ENCODE measurements at regions of chr1 and their contacts with region 1.

Region 1: DNA sequence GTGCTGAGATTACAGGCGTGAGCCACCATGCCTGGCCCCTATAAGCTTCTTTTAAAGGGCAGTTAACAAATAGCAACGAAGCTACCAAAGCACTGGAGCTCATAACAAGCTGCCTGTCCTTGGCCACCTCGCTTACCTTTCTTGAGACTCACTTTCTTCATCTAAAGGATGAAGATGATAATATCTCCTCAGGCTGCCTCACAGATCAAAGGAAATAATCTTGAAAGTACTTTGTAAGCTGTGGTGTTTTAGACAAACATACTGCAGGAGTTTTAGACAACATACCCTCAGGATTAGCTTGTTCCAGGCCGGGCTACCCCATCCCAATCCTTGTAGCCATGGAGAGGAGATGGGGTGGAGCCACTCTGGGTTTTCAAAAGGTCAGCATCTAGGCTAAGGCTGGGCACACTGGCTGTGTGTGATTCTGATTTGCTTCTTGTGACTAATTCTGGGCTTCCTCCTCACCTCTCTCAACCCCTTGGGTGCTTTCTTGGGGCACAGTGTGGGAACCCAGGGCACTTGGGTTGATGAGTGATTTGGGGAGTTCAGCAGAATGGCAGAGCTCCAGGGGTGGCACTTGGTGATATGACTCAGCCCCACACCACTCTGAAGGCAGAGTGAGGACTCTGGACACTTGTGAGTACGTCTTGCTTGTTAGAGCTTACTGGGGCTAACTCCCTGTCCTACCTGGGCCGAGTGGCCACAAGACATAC is 5.2 kb downstream of the GPR25 start:
- DNase-seq: peak; percentile 86
- ATAC-seq: peak; percentile 88
- H3K4me3 Mint-ChIP-seq: no peak overlapping the region
- H3K27ac Mint-ChIP-seq: no peak overlapping the region
- H3K4me1 Mint-ChIP-seq: peaks cover 50% of the 10 kb centered on the region
- H3K27me3 Mint-ChIP-seq: peaks cover 43% of the 10 kb centered on the region

Region 2: DNA sequence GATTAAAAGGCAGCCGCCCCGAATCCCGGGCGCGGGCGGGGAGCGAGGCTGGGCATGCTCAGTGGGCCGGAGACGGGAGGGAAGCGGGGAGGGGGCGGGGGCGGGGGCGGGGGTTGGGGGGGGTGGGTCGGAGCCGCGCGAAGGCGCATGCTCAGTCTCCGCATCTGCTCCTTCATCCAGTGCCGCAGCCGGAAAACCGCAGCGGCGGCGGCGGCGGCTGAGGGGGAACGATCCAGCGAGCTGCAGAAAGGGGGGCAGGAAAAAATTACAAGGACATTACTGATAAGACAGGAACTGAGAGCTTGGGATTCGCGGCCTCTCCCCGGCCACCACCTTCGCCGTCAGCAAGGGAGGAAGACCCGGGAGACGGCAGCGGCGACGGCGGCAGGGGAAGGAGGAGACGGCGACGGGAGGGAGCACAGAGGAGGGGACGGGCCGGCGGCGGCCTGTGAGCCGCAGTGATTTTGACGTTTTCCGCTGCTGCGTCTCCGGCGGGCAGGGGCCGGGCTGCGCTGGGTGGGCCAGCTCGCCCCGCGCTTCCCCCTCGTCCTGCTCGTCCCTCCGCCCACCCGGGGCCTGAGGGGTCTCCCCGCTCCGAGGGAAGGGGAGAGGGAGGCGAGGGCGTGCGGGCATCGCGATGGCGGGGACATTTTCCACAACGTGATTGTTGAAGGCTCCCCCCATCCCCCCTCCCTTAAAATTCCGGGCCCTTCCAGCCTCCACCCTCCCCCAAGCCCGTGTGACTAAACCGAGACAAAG is 139.1 kb before region 1 on chr1 and contains the start of gene CAMSAP2:
- CTCF ChIA-PET with region 1: interaction called, 3 read pairs
- POLR2A ChIA-PET with region 1: no interaction called
- intact Hi-C with region 1: loop called in 1 of 2 experiments (anchors 5 kb)
- DNase-seq: peak; percentile 74
- ATAC-seq: peak; percentile 51
- H3K4me3 Mint-ChIP-seq: peak within 1 kb of the TSS; percentile 91
- H3K27ac Mint-ChIP-seq: peak within 1 kb of the TSS; percentile 90
- H3K4me1 Mint-ChIP-seq: peaks cover 44% of the 10 kb centered on the region
- H3K27me3 Mint-ChIP-seq: peaks cover 4% of the 10 kb centered on the region
- total RNA-seq, gene CAMSAP2: 2.3 to 3.0 TPM

Region 3: DNA sequence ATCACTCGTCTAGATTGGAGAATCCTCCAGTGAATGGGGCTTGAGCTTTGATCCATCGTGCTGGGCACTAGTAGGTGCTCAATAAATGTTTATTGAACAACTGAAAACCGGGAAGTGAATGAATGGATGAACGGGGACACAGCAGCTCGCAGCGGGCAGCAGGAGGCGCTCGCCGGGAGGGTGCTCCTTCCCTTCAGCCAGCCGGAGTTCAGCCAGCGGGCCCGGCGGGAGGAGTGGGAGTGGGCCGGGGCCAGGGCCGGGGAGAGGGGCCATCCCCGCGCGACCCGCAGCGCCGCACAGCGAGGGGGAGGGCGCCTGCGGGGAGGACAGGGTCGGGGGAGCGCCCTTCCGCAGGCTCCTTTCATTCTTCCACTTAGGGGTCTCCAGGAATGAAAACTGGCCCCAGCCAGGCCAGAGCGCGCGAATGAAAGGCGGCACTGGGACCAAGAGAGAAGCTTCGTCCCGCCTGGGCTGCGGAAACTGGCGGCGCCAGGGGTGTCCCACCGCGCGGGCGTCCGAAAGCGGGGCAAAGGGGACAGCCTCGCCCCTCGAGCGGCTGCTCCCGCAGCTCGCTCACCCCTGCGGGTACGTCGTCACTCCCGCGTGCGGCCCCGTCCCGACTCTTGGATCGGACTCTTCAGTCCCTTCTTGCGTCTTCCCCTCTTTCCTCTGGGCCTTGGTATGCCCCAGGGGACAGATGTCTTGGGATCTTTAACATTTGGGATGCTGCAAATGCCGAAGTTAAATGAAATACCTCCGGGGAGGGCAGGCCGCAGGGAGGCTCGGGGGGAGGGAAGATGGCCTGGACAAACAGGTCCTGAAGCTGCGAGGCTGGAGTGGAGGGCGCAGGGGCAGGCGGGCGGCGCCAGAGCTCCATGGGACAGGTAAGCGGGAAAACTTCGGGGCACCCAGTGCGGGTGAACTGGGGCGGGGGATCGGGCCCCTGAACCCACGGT is 13.1 kb after region 1 on chr1:
- CTCF ChIA-PET with region 1: interaction called, 31 read pairs
- POLR2A ChIA-PET with region 1: interaction called, 21 read pairs
- intact Hi-C with region 1: loop called (anchors 1 kb)
- DNase-seq: no peak
- ATAC-seq: no peak
- H3K4me3 Mint-ChIP-seq: peak overlapping the region; percentile 12
- H3K27ac Mint-ChIP-seq: no peak overlapping the region
- H3K4me1 Mint-ChIP-seq: peaks cover 46% of the 10 kb centered on the region
- H3K27me3 Mint-ChIP-seq: peaks cover 35% of the 10 kb centered on the region

Region 4: DNA sequence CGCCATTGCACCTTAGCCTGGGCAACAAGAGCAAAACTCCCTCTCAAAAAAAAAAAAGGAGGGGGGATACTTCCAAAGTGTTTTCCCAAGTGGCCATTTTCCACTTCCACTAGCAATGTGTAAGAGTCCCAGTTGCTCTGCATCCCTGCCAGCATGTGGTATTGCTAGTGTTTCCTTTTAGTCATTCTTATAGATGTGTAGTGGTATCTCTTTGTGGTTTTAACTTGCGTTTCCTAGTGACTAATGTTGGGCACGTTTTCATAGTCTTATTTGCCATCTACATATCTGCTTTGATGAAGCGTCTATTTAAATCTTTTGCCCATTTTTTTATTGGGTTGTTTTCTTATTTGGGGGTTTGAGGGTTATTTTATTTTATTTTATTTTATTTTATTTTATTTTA is 47.8 kb after region 1 on chr1:
- CTCF ChIA-PET with region 1: interaction called, 3 read pairs
- POLR2A ChIA-PET with region 1: no interaction called
- intact Hi-C with region 1: loop called in 1 of 2 experiments (anchors 1 kb)
- DNase-seq: peak; percentile 46
- ATAC-seq: peak; percentile 96
- H3K4me3 Mint-ChIP-seq: no peak overlapping the region
- H3K27ac Mint-ChIP-seq: no peak overlapping the region
- H3K4me1 Mint-ChIP-seq: peaks cover 8% of the 10 kb centered on the region
- H3K27me3 Mint-ChIP-seq: peaks cover 24% of the 10 kb centered on the region

Measured in activated CD4-positive, alpha-beta T cell treated with anti-CD3 and anti-CD28 coated beads for 36 hours (primary cell).